ENCODE measurements at regions of chr10 and their contacts with region 1.

Region 1: GRCh38 chr10:119859420-119860258 is 13.0 kb downstream of the MCMBP start:
- DNase-seq: no peak

Region 2: GRCh38 chr10:119608316-119609155 is 251.1 kb before region 1 on chr10:
- intact Hi-C with region 1: loop called (anchors 5 kb)
- DNase-seq: peak; percentile 50 to 88 (median 73)

Region 3: DNA sequence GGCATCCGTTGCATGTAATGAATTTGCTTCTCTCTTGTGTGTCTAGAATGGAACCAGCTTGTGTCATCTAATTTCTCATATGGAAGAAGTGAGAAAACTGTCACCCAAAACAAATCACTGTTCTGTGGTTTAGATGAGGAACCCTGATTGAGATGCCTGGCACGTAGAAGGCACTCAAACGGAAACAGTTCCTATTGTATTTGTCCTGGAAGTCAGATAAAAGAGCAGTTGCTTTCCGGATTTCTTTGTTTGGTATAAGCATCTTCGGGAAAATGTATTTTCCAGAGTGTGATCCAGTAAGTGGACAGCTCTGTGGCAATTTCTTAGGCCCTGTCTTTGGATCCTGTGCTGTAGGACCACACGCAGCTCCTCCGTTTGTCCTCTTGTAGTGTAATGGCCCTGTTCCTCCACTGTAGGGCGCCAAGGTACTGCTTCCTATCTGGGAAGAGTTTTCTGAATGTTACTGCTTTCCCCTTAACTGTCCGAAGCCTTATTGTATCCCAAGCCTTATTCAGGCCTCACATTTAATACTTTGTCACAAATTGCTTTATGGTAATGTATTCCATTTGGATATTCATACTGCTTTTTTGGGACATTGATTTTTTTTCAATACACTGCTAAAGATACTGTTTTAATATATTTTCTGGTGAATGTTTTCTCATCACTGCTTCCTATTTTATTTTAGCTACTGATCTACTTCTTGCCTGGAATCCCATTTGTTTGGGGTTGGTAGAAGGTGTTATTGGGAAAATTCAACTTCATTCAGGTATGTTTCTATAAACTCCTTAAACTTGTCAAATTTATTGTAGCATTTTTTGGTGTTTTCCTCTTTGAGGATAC is 109.0 kb before region 1 on chr10:
- intact Hi-C with region 1: loop called (anchors 10 kb)
- DNase-seq: peak; percentile 40 to 92 (median 84)

Measured in head of caudate nucleus (tissue), 42 donors.